PC-3 (cell line): ENCODE measurements at regions of chr4 and their contacts with region 1.

Region 1: GRCh38 chr4:65316534-65316933 is 353.8 kb downstream of the EPHA5 start:
- DNase-seq: no peak
- ATAC-seq: no peak
- H3K4me3 ChIP-seq: no peak overlapping the region
- H3K27ac ChIP-seq: no peak overlapping the region
- H3K4me1 ChIP-seq: no peaks in the 10 kb centered on the region
- H3K27me3 ChIP-seq: no peaks in the 10 kb centered on the region
- CTCF ChIP-seq: no peak

Region 2: GRCh38 chr4:64399313-64400109 is 917.0 kb before region 1 on chr4:
- CTCF ChIA-PET with region 1: no interaction called
- POLR2A ChIA-PET with region 1: no interaction called
- intact Hi-C with region 1: no loop called
- DNase-seq: no peak
- ATAC-seq: no peak
- H3K4me3 ChIP-seq: no peak overlapping the region
- H3K27ac ChIP-seq: no peak overlapping the region
- H3K4me1 ChIP-seq: no peaks in the 10 kb centered on the region
- H3K27me3 ChIP-seq: no peaks in the 10 kb centered on the region
- CTCF ChIP-seq: no peak

Region 3: GRCh38 chr4:65265538-65265937 is 51.0 kb before region 1 on chr4:
- CTCF ChIA-PET with region 1: no interaction called
- POLR2A ChIA-PET with region 1: no interaction called
- intact Hi-C with region 1: loop called (anchors 10 kb)
- DNase-seq: no peak
- ATAC-seq: no peak
- H3K4me3 ChIP-seq: no peak overlapping the region
- H3K27ac ChIP-seq: no peak overlapping the region
- H3K4me1 ChIP-seq: no peaks in the 10 kb centered on the region
- H3K27me3 ChIP-seq: no peaks in the 10 kb centered on the region
- CTCF ChIP-seq: no peak

Region 4: GRCh38 chr4:65370709-65371108 is 54.2 kb after region 1 on chr4:
- CTCF ChIA-PET with region 1: no interaction called
- POLR2A ChIA-PET with region 1: no interaction called
- intact Hi-C with region 1: loop called (anchors 5 kb)
- DNase-seq: no peak
- ATAC-seq: no peak
- H3K4me3 ChIP-seq: no peak overlapping the region
- H3K27ac ChIP-seq: no peak overlapping the region
- H3K4me1 ChIP-seq: no peaks in the 10 kb centered on the region
- H3K27me3 ChIP-seq: no peaks in the 10 kb centered on the region
- CTCF ChIP-seq: no peak

Region 5: DNA sequence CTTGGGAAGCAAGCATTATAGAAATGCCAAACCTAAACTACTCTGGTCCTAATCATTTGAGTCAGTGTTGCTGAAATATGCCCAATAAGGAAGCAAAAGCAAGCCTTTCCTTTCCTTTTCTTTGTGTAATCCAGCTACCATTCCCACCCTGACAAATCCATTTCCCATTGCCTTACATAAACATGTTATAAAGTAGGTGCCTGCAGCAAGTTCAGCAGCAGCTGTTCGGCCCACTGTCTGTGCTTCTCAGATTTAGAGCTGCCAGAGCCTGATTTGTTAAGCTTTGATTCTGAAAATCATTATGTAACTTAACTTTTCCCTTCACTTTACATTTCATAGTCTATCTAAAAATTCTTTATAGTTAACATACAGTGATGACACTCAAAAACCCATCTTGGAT is 205.1 kb after region 1 on chr4:
- CTCF ChIA-PET with region 1: no interaction called
- POLR2A ChIA-PET with region 1: no interaction called
- intact Hi-C with region 1: no loop called
- DNase-seq: no peak
- ATAC-seq: no peak
- H3K4me3 ChIP-seq: no peak overlapping the region
- H3K27ac ChIP-seq: no peak overlapping the region
- H3K4me1 ChIP-seq: no peaks in the 10 kb centered on the region
- H3K27me3 ChIP-seq: no peaks in the 10 kb centered on the region
- CTCF ChIP-seq: no peak